Panc1 (cell line): ENCODE measurements at regions of chr10 and their contacts with region 1.

Region 1: DNA sequence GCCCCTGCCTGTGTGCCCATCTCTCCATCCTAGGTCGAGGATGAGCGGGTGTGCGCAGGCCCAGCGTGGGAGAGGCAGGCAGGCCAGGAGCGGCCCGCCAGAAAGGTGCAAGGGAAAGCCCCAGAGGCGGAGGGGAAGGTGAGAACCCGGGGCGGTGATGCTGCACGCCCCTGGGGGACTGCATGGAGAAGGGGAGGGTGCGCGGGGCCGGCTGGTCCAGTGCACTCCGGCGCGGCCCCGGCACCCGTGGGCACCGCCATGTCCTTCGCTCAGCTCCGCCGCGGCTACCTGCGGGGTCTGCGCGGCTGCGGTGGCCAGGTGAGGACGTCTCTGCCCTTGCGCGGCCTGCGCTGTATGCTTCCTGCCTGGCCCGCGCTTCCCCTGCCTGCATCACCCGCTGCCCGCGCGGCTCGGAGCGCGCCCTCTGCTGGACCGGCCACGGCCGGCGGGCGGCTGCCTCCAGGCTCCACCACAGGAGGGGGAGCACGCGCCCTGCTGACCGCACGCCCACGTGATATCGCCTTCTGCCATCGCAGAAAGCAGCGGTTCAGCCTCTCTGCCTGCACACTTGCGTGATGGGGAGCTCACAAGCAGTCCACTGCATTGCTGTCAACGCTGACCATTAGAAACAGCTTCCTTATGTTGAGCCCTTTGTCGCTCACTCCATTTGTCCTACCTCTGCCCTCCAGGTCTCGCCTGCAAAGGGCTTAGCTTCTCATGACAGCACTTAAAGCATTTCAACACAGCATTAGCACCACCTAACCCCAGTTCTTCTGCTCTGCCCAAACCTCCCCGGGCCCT is 73.9 kb downstream of the CXCL12 start:
- DNase-seq: no peak
- ATAC-seq: peak; percentile 97
- H3K4me3 ChIP-seq: peak overlapping the region in 1 of 2 experiments; percentile 18; a peak in 1 of 4 replicates
- H3K27ac ChIP-seq: no peak overlapping the region
- H3K4me1 ChIP-seq: no peaks in the 10 kb centered on the region
- H3K27me3 ChIP-seq: peaks cover 6% of the 10 kb centered on the region; the same call in 1 of the 2 replicates
- CTCF ChIP-seq: peak; percentile 97

Region 2: GRCh38 chr10:43689955-43690771 is 620.8 kb before region 1 on chr10:
- CTCF ChIA-PET with region 1: no interaction called
- POLR2A ChIA-PET with region 1: no interaction called
- in situ Hi-C with region 1: no loop called
- intact Hi-C with region 1: loop called (anchors 5 kb)
- DNase-seq: no peak
- ATAC-seq: peak; percentile 99
- H3K4me3 ChIP-seq: peak overlapping the region; percentile 62 to 91
- H3K27ac ChIP-seq: peak overlapping the region; percentile 70
- H3K4me1 ChIP-seq: no peaks in the 10 kb centered on the region
- H3K27me3 ChIP-seq: peaks cover 7% of the 10 kb centered on the region
- CTCF ChIP-seq: peak; percentile 100

Region 3: DNA sequence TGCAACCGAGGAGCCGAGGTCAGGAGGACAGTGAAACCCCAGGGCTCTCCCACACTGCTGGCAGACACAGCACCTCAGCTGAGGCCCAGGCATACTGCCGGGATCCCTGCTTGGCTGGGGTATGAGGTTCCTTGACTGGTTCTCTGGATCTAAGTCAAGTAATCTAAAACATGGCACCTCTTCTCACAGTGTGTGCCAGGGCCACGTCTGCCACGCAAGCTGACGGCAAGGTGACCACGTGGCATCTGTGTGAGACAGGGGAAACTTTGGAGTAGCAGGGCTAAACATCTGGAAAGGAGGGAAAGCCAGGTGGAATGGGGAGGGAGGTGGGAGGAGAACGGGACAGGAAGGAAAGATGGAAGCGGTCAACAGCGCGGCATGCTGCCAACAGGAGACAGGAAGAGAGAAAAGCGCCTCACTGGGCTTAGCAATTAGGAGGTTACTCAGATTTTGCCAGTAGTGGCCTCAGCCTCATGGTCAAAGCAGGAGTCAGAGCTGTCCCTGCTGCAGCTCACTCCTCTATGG is 29.8 kb before region 1 on chr10:
- CTCF ChIA-PET with region 1: no interaction called
- POLR2A ChIA-PET with region 1: no interaction called
- in situ Hi-C with region 1: no loop called
- intact Hi-C with region 1: no loop called
- DNase-seq: no peak
- ATAC-seq: no peak
- H3K4me3 ChIP-seq: no peak overlapping the region
- H3K27ac ChIP-seq: no peak overlapping the region
- H3K4me1 ChIP-seq: no peaks in the 10 kb centered on the region
- H3K27me3 ChIP-seq: 0 out of 2 replicates have a peak, but pooled peaks cover 3% of the 10 kb centered on the region
- CTCF ChIP-seq: no peak

Region 4: GRCh38 chr10:44370731-44371248 is 59.8 kb after region 1 on chr10:
- CTCF ChIA-PET with region 1: no interaction called
- POLR2A ChIA-PET with region 1: no interaction called
- in situ Hi-C with region 1: no loop called
- intact Hi-C with region 1: no loop called
- DNase-seq: no peak
- ATAC-seq: no peak
- H3K4me3 ChIP-seq: no peak overlapping the region
- H3K27ac ChIP-seq: no peak overlapping the region
- H3K4me1 ChIP-seq: no peaks in the 10 kb centered on the region
- H3K27me3 ChIP-seq: peaks cover 15% of the 10 kb centered on the region
- CTCF ChIP-seq: no peak

Region 5: GRCh38 chr10:44857363-44858016 is 546.5 kb after region 1 on chr10:
- CTCF ChIA-PET with region 1: no interaction called
- POLR2A ChIA-PET with region 1: no interaction called
- in situ Hi-C with region 1: no loop called
- intact Hi-C with region 1: loop called (anchors 10 kb)
- DNase-seq: no peak
- ATAC-seq: peak; percentile 79
- H3K4me3 ChIP-seq: no peak overlapping the region
- H3K27ac ChIP-seq: no peak overlapping the region
- H3K4me1 ChIP-seq: no peaks in the 10 kb centered on the region
- H3K27me3 ChIP-seq: no peaks in the 10 kb centered on the region
- CTCF ChIP-seq: peak; percentile 100